WTC11 (cell line): ENCODE measurements at regions of chr1 and their contacts with region 1.

Region 1: GRCh38 chr1:12124693-12125421 is 41.9 kb upstream of the TNFRSF1B start:
- DNase-seq: peak; percentile 78
- ATAC-seq: peak; percentile 40; the same call in 1 of the 2 replicates
- H3K4me3 Mint-ChIP-seq: no peak overlapping the region
- H3K27ac Mint-ChIP-seq: 0 out of 2 replicates have a peak overlapping the region, but pooled peaks have one; percentile 33
- H3K4me1 Mint-ChIP-seq: peaks cover 3% of the 10 kb centered on the region; the same call in 1 of the 2 replicates
- H3K27me3 Mint-ChIP-seq: no peaks in the 10 kb centered on the region
- CTCF ChIP-seq: peak; percentile 97

Region 2: DNA sequence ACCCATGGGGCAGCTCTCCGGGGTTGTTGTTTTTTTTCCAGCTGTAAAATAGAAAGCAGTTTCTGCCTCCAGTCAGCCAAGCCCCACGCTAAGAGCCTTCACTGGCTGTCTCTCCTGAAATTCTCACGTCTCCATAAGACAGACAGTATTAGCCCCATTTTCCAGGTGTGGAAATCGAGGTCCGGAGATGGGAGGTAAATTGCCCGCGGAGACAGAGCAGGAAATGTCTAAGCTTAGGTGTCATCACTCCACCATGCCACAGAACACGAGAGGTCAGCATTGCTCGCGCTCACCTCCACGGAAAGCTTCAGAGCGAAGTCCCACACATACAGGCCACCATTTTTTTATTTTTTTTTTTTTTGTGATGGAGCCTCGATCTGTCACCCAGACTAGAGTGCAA is 17.1 kb before region 1 on chr1:
- CTCF ChIA-PET with region 1: interaction called, 13 read pairs
- POLR2A ChIA-PET with region 1: no interaction called
- DNase-seq: no peak
- ATAC-seq: no peak
- H3K4me3 Mint-ChIP-seq: no peak overlapping the region
- H3K27ac Mint-ChIP-seq: no peak overlapping the region
- H3K4me1 Mint-ChIP-seq: no peaks in the 10 kb centered on the region
- H3K27me3 Mint-ChIP-seq: no peaks in the 10 kb centered on the region
- CTCF ChIP-seq: no peak

Region 3: GRCh38 chr1:12147201-12147701 is 22.4 kb after region 1 on chr1:
- CTCF ChIA-PET with region 1: interaction called, 16 read pairs
- POLR2A ChIA-PET with region 1: no interaction called
- DNase-seq: no peak
- ATAC-seq: no peak
- H3K4me3 Mint-ChIP-seq: no peak overlapping the region
- H3K27ac Mint-ChIP-seq: no peak overlapping the region; the same call in 1 of the 2 replicates
- H3K4me1 Mint-ChIP-seq: peaks cover 8% of the 10 kb centered on the region
- H3K27me3 Mint-ChIP-seq: peaks cover 13% of the 10 kb centered on the region
- CTCF ChIP-seq: no peak

Region 4: GRCh38 chr1:12177999-12178441 is 53.2 kb after region 1 on chr1:
- CTCF ChIA-PET with region 1: interaction called, 18 read pairs
- POLR2A ChIA-PET with region 1: no interaction called
- DNase-seq: no peak
- ATAC-seq: peak; percentile 51
- H3K4me3 Mint-ChIP-seq: no peak overlapping the region
- H3K27ac Mint-ChIP-seq: no peak overlapping the region
- H3K4me1 Mint-ChIP-seq: peaks cover 30% of the 10 kb centered on the region
- H3K27me3 Mint-ChIP-seq: no peaks in the 10 kb centered on the region; the same call in 1 of the 2 replicates
- CTCF ChIP-seq: no peak

Region 5: GRCh38 chr1:12208764-12209494 is 84.1 kb after region 1 on chr1:
- CTCF ChIA-PET with region 1: interaction called, 325 read pairs
- POLR2A ChIA-PET with region 1: no interaction called
- DNase-seq: peak; percentile 95
- ATAC-seq: peak; percentile 92
- H3K4me3 Mint-ChIP-seq: no peak overlapping the region
- H3K27ac Mint-ChIP-seq: no peak overlapping the region
- H3K4me1 Mint-ChIP-seq: peaks cover 25% of the 10 kb centered on the region
- H3K27me3 Mint-ChIP-seq: peaks cover 3% of the 10 kb centered on the region; the same call in 1 of the 2 replicates
- CTCF ChIP-seq: peak; percentile 93

Region 6: DNA sequence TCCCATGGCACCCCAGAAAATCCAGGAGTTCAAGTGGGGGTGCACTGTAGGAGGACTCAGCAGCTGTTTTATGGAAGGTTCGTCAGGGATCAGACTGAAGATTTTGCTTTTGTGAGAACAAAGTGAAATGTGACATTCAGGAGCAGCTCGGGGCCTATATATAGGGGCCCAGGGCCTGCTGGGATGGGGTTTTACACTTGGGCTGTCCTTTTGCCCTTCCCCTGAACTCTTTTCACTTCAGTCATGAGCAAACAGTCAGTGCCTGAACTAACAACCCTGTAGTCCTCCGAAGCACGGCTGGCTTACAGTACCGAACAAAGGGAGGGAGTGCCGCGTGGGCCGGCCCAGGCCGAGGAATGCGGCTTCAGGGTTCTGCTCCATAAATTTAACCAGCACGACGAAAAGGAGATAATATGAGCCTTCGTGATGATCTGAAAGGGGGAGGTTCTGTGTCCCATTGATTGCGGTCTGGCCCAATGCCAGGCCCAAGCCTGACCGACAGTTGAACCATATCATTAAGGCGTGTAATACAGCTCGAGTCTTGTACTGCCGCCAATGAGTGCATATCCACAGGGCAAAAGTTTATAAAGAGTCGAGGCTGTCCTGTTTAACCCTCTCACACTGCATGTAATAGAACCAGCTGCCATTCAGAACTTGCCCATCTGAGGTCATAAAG is 353.2 kb after region 1 on chr1:
- CTCF ChIA-PET with region 1: no interaction called
- POLR2A ChIA-PET with region 1: no interaction called
- DNase-seq: no peak
- ATAC-seq: peak; percentile 60
- H3K4me3 Mint-ChIP-seq: no peak overlapping the region
- H3K27ac Mint-ChIP-seq: peak overlapping the region; percentile 66; the same call in 1 of the 2 replicates
- H3K4me1 Mint-ChIP-seq: peaks cover 20% of the 10 kb centered on the region
- H3K27me3 Mint-ChIP-seq: no peaks in the 10 kb centered on the region
- CTCF ChIP-seq: no peak